ENCODE measurements at regions of chr5 and their contacts with region 1.

Region 1: GRCh38 chr5:146203011-146203871 is at the start of gene RBM27:
- DNase-seq: peak; percentile 97
- H3K4me3 Mint-ChIP-seq: no peak within 1 kb of the TSS
- H3K27ac Mint-ChIP-seq: no peak within 1 kb of the TSS
- H3K4me1 Mint-ChIP-seq: peaks cover 19% of the 10 kb centered on the region
- H3K27me3 Mint-ChIP-seq: no peaks in the 10 kb centered on the region
- total RNA-seq, gene RBM27: 18.8 to 23.3 TPM

Region 2: DNA sequence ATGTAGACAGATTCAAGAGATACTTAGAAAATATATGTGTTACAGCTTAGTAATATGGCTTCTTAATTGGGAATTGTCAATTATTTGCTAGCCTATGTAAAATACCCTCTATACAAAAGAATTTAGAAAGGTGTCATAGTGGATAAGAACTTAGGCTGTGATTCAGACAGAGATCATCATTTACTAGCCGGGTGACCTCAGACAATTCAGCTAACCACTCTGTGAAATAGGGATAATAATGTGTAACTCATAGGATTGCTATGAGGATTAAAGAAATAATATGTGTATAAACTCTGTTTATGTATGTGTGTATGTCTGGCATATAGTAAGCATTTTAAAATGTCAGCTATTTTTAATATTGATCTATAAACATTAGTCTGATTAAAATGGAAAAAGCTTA is 14.9 kb before region 1 on chr5:
- CTCF ChIA-PET with region 1: interaction called, 8 read pairs
- POLR2A ChIA-PET with region 1: interaction called, 16 read pairs
- DNase-seq: no peak
- H3K4me3 Mint-ChIP-seq: no peak overlapping the region
- H3K27ac Mint-ChIP-seq: no peak overlapping the region
- H3K4me1 Mint-ChIP-seq: peaks cover 8% of the 10 kb centered on the region
- H3K27me3 Mint-ChIP-seq: peaks cover 10% of the 10 kb centered on the region

Region 3: GRCh38 chr5:146283344-146283761 is 80.1 kb after region 1 on chr5:
- CTCF ChIA-PET with region 1: no interaction called
- POLR2A ChIA-PET with region 1: no interaction called
- DNase-seq: no peak
- H3K4me3 Mint-ChIP-seq: no peak overlapping the region
- H3K27ac Mint-ChIP-seq: no peak overlapping the region
- H3K4me1 Mint-ChIP-seq: no peaks in the 10 kb centered on the region
- H3K27me3 Mint-ChIP-seq: no peaks in the 10 kb centered on the region